Vagina (tissue), 2 donors: ENCODE measurements at regions of chr20 and their contacts with region 1.

Region 1: DNA sequence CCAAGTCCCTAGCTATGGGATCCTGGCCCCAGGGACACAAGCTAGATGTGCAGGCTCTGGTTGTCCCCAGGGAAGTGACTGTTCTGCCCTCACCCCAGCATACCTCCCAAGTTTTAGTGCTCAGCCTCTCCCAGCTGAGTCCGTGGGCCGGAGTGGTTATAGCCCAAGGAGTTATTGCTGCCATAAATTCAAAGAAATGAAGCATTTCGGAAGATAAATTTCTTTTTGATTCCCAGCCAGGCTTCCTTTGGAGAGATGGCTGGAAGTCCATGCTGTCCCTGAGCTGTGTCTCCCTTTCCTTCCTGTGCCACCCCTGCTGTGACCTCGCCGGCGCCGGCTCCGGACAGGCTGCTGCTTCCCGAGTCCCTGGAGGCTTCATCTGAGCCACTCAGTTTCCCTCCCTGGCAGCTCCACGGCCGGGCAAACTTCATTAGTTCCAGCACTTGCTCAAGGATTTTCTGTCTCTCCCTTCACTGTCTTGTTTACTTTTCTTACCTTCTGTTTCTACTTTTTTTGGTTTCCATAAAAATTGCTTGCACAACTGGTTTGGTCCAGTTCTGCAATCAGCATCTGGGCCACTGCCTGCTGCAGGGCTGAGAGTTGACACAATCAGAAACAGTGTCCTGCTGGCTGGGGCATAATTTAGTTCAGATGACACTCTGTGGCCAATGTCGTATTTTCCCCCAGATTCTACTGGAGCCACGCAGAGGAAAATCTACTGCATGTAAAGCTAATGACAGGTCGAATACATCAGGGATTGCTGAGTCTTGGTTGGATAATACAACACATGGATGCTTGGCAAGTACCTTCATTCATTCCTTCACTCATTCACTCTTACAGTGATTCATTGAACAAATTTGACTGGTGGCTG is 225.5 kb downstream of the SYNDIG1 start:
- DNase-seq: peak; percentile 83 to 91
- H3K4me3 ChIP-seq: no peak overlapping the region
- H3K27ac ChIP-seq: peak overlapping the region; percentile 67
- H3K4me1 ChIP-seq: peaks cover 21% of the 10 kb centered on the region
- H3K27me3 ChIP-seq: no peaks in the 10 kb centered on the region
- CTCF ChIP-seq: no peak
- POLR2A ChIP-seq: no peak

Region 2: DNA sequence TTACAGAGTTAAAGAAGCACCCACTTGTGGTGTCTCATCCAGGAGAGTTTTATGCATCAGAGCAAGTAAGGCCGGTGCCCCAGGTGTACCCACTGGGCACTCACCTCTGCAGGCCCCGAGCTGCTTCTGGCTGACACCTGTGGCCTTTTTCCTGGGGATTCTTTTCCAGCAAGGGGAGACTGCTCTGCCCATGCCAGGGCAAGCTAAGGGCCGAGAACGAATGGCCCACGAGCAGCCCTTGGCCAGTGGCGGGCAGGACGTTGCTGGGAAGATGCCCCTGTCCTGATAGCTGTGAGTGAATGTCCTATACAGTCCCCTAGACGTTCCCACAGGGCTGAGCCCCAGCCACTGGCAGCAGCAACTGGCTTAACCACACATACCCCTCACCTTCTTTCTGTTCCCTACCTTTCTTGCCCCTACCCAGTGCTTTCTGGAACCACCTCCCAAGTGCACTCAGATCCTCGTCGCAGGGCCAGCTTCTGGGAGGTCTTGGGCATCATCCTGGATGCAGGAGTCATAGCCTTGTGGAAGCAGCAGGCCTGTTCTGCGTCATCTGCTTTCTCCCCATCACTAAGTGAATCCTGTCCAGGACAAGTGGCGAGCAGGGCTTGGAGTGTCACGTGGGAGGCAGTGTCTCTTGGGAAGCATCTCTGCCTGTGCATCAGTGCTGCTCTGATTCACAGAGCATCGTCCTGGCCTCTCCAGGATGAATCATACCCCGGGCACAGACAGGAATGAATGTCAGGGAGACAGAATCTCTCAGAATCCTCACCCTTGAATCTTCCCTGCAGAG is 193.0 kb before region 1 on chr20:
- intact Hi-C with region 1: loop called (anchors 10 kb)
- DNase-seq: peak in 1 of 2 donors; percentile 91
- H3K4me3 ChIP-seq: no peak overlapping the region
- H3K27ac ChIP-seq: no peak overlapping the region
- H3K4me1 ChIP-seq: no peaks in the 10 kb centered on the region
- H3K27me3 ChIP-seq: no peaks in the 10 kb centered on the region
- CTCF ChIP-seq: no peak
- POLR2A ChIP-seq: no peak